CD8-positive, alpha-beta T cell (primary cell): ENCODE measurements at regions of chr1 and their contacts with region 1.

Region 1: GRCh38 chr1:226687426-226687825 is 51.7 kb downstream of the ITPKB start:
- DNase-seq: peak in 6 of 9 experiments; percentile 35 to 81 (median 68)
- ATAC-seq: peak; percentile 22
- H3K4me3 ChIP-seq: no peak overlapping the region
- H3K4me3 Mint-ChIP-seq: peak overlapping the region; percentile 30
- H3K27ac ChIP-seq: peak overlapping the region; percentile 16 to 60
- H3K27ac Mint-ChIP-seq: peak overlapping the region; percentile 99
- H3K4me1 ChIP-seq: peaks cover 100% of the 10 kb centered on the region
- H3K4me1 Mint-ChIP-seq: peaks cover 99% of the 10 kb centered on the region
- H3K27me3 ChIP-seq: no peaks in the 10 kb centered on the region
- H3K27me3 Mint-ChIP-seq: no peaks in the 10 kb centered on the region
- CTCF ChIP-seq: peak; percentile 65

Region 2: GRCh38 chr1:226407497-226408284 is 279.7 kb before region 1 on chr1 and contains the start of gene PARP1:
- CTCF ChIA-PET with region 1: no interaction called
- POLR2A ChIA-PET with region 1: no interaction called
- intact Hi-C with region 1: no loop called
- DNase-seq: peak; percentile 78 to 94 (median 86)
- ATAC-seq: peak; percentile 87
- H3K4me3 ChIP-seq: peak within 1 kb of the TSS; percentile 68 to 92
- H3K4me3 Mint-ChIP-seq: peak within 1 kb of the TSS; percentile 94
- H3K27ac ChIP-seq: peak within 1 kb of the TSS; percentile 64 to 65
- H3K27ac Mint-ChIP-seq: peak within 1 kb of the TSS; percentile 90
- H3K4me1 ChIP-seq: peaks cover 45% of the 10 kb centered on the region
- H3K4me1 Mint-ChIP-seq: peaks cover 46% of the 10 kb centered on the region
- H3K27me3 ChIP-seq: no peaks in the 10 kb centered on the region
- H3K27me3 Mint-ChIP-seq: no peaks in the 10 kb centered on the region
- CTCF ChIP-seq: peak; percentile 73
- total RNA-seq, gene PARP1: 38.6 to 46.2 TPM

Region 3: DNA sequence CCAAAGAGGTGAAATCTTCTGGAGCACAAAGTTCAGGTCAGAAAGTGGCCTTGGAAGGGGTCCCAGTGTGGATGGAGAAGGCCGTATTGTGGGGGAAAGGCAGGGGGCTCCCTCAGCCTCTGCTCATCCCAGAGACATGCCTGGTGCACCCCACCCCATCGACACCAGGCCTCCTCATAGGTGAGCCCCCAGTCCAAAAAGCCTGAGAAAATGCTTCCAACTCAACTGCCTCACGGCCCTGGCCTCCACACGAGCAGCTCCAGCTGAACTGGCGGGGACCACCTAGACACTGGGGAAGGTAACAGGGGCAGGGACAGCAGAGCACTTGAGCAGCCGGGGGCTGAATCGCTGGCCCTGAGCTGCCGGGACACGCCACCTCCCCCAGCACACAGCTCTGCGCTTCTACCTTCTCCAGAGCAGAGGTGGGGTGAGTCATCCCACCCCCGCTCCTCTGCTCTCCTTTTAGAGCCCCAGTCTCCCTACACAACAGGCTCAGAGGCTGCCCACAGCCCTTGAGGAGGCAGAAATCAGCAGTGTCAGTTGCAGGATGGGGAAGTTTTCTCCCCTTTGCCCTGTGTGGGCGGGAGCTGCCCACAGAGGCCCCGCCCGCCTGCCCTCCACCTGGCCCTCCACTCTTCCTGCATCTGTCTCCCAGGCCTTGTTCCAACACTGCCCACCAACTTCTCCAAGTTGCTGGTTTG is 44.4 kb before region 1 on chr1:
- CTCF ChIA-PET with region 1: interaction called, 92 read pairs
- POLR2A ChIA-PET with region 1: interaction called, 4 read pairs
- intact Hi-C with region 1: loop called in 1 of 2 experiments (anchors 2 kb)
- DNase-seq: peak in 6 of 9 experiments; percentile 49 to 73 (median 66)
- ATAC-seq: peak; percentile 76
- H3K4me3 ChIP-seq: no peak overlapping the region
- H3K4me3 Mint-ChIP-seq: peak overlapping the region; percentile 54
- H3K27ac ChIP-seq: peak overlapping the region; percentile 27 to 34
- H3K27ac Mint-ChIP-seq: peak overlapping the region; percentile 89
- H3K4me1 ChIP-seq: peaks cover 57% of the 10 kb centered on the region
- H3K4me1 Mint-ChIP-seq: peaks cover 55% of the 10 kb centered on the region
- H3K27me3 ChIP-seq: no peaks in the 10 kb centered on the region
- H3K27me3 Mint-ChIP-seq: no peaks in the 10 kb centered on the region
- CTCF ChIP-seq: no peak

Region 4: GRCh38 chr1:226649780-226650179 is 37.6 kb before region 1 on chr1:
- CTCF ChIA-PET with region 1: interaction called, 61 read pairs
- POLR2A ChIA-PET with region 1: interaction called, 5 read pairs
- intact Hi-C with region 1: loop called (anchors 2 kb)
- DNase-seq: peak in 6 of 9 experiments; percentile 53 to 74 (median 64)
- ATAC-seq: no peak
- H3K4me3 ChIP-seq: no peak overlapping the region
- H3K4me3 Mint-ChIP-seq: no peak overlapping the region
- H3K27ac ChIP-seq: peak overlapping the region in 1 of 2 experiments; percentile 23
- H3K27ac Mint-ChIP-seq: no peak overlapping the region
- H3K4me1 ChIP-seq: peaks cover 52% of the 10 kb centered on the region
- H3K4me1 Mint-ChIP-seq: peaks cover 57% of the 10 kb centered on the region
- H3K27me3 ChIP-seq: no peaks in the 10 kb centered on the region
- H3K27me3 Mint-ChIP-seq: no peaks in the 10 kb centered on the region
- CTCF ChIP-seq: peak; percentile 59

Region 5: DNA sequence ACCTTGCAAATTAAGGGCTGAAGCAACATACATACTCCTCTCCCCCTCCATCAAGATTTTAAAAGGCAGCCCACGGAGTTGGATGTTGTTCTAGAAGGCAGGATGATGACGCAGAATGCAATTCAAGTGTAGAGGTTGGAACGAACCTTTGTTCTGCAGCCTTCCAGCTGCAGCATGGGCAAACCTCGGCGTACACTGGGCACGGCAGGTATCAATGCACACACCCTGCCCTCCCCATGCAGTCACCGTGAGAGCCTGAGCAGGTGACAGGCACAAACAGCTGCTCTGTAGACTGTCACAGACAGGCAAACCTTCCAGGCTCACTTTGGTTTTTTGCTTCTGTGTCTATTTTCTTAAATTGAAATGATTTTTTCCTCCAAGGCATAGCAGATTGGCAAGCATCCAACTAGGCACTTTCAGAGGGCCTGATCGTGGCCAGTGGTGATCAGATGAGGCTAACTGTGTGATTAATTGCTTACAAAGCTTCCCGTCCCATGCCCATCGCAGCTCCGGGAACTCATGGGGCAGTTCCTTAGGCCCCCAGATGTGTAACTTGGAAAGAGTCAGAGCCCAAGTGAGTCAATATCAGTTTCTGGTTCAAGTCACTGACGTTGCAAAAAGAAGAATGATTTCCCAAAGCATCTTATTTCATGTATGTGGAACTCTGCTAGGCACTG is 30.7 kb before region 1 on chr1:
- CTCF ChIA-PET with region 1: interaction called, 61 read pairs
- POLR2A ChIA-PET with region 1: interaction called, 6 read pairs
- intact Hi-C with region 1: loop called in 1 of 2 experiments (anchors 2 kb)
- DNase-seq: peak in 6 of 9 experiments; percentile 39 to 91 (median 71)
- ATAC-seq: peak; percentile 68
- H3K4me3 ChIP-seq: no peak overlapping the region
- H3K4me3 Mint-ChIP-seq: peak overlapping the region; percentile 61
- H3K27ac ChIP-seq: no peak overlapping the region
- H3K27ac Mint-ChIP-seq: no peak overlapping the region
- H3K4me1 ChIP-seq: no peaks in the 10 kb centered on the region
- H3K4me1 Mint-ChIP-seq: peaks cover 30% of the 10 kb centered on the region
- H3K27me3 ChIP-seq: no peaks in the 10 kb centered on the region
- H3K27me3 Mint-ChIP-seq: no peaks in the 10 kb centered on the region
- CTCF ChIP-seq: no peak

Region 6: DNA sequence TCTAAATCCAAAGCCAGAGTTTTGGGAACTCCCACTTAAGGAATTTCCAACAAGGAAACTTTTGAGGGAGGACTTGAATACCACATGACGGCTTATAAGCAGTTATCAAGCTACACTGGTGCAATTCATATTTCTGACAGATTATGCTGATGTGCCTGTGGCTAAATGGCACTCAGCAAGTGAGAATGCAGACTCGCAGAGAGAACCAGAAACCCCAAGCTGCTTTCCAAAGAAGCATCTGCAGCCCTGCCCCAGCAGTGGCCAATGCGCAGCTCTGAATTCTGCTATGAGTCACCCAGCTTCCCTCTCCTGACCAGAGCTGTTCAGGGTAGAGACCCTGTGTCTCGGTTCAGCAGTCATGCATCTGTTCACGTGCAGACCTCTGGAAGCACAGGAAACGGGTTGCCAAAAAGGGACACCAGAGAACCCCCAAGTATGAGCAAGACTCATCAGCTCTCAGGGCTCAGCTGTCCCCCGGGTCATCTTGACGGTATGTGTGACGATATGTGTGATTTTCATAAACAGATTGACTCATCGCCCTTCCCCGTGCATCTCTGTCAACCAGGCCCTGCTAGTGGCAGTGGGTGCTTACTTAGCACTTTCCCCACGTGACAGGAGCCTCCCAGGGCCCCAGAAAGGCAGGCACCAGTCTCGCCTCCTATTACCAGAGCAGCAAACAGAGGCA is 24.6 kb before region 1 on chr1:
- CTCF ChIA-PET with region 1: interaction called, 19 read pairs
- POLR2A ChIA-PET with region 1: interaction called, 6 read pairs
- intact Hi-C with region 1: loop called in 1 of 2 experiments (anchors 2 kb)
- DNase-seq: peak; percentile 69 to 99 (median 85)
- ATAC-seq: peak; percentile 83
- H3K4me3 ChIP-seq: peak overlapping the region; percentile 1 to 13
- H3K4me3 Mint-ChIP-seq: peak overlapping the region; percentile 59
- H3K27ac ChIP-seq: peak overlapping the region in 1 of 2 experiments; percentile 65
- H3K27ac Mint-ChIP-seq: no peak overlapping the region
- H3K4me1 ChIP-seq: no peaks in the 10 kb centered on the region
- H3K4me1 Mint-ChIP-seq: peaks cover 89% of the 10 kb centered on the region
- H3K27me3 ChIP-seq: no peaks in the 10 kb centered on the region
- H3K27me3 Mint-ChIP-seq: no peaks in the 10 kb centered on the region
- CTCF ChIP-seq: no peak

Region 7: GRCh38 chr1:226702957-226703831 is 15.8 kb after region 1 on chr1:
- CTCF ChIA-PET with region 1: interaction called, 26 read pairs
- POLR2A ChIA-PET with region 1: interaction called, 11 read pairs
- intact Hi-C with region 1: loop called in 1 of 2 experiments (anchors 1 kb)
- DNase-seq: peak; percentile 56 to 94 (median 80)
- ATAC-seq: peak; percentile 82
- H3K4me3 ChIP-seq: peak overlapping the region; percentile 51 to 54
- H3K4me3 Mint-ChIP-seq: peak overlapping the region; percentile 72
- H3K27ac ChIP-seq: peak overlapping the region; percentile 72 to 92
- H3K27ac Mint-ChIP-seq: peak overlapping the region; percentile 92
- H3K4me1 ChIP-seq: peaks cover 85% of the 10 kb centered on the region
- H3K4me1 Mint-ChIP-seq: peaks cover 88% of the 10 kb centered on the region
- H3K27me3 ChIP-seq: no peaks in the 10 kb centered on the region
- H3K27me3 Mint-ChIP-seq: no peaks in the 10 kb centered on the region
- CTCF ChIP-seq: no peak

Region 8: DNA sequence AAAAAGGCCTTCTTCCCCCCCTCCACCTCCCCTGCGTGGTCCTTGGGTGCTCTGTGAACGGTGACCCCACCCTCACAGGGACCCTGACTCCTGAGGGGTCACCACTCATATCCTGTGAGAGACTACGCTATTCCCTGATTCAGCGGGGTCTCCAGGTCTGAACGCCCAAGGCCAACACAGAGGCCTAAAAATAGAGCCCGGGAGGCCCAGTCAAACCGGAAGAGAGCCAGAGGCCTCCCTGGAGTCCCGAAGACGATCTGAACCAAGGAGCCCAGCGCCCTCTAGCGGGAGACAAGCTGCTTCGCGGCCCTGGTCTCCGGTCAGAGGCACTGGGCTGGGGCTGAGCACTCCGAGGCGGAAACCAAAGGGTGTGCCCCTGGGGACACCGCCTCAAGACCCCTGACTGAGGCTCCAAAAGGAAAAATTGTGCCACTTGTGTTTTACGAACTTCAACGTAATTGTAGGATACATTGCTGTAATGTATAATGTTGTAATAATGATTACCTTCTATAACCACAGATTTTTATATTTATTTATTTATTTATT is 140.6 kb after region 1 on chr1:
- CTCF ChIA-PET with region 1: interaction called, 12 read pairs
- POLR2A ChIA-PET with region 1: interaction called, 3 read pairs
- intact Hi-C with region 1: loop called (anchors 5 kb)
- DNase-seq: peak; percentile 86 to 98 (median 93)
- ATAC-seq: peak; percentile 99
- H3K4me3 ChIP-seq: peak overlapping the region; percentile 3 to 21
- H3K4me3 Mint-ChIP-seq: peak overlapping the region; percentile 58
- H3K27ac ChIP-seq: peak overlapping the region; percentile 46 to 73
- H3K27ac Mint-ChIP-seq: peak overlapping the region; percentile 69
- H3K4me1 ChIP-seq: peaks cover 10% of the 10 kb centered on the region
- H3K4me1 Mint-ChIP-seq: peaks cover 20% of the 10 kb centered on the region
- H3K27me3 ChIP-seq: no peaks in the 10 kb centered on the region
- H3K27me3 Mint-ChIP-seq: no peaks in the 10 kb centered on the region
- CTCF ChIP-seq: peak; percentile 94